ENCODE measurements at regions of chr1 and their contacts with region 1.

Region 1: DNA sequence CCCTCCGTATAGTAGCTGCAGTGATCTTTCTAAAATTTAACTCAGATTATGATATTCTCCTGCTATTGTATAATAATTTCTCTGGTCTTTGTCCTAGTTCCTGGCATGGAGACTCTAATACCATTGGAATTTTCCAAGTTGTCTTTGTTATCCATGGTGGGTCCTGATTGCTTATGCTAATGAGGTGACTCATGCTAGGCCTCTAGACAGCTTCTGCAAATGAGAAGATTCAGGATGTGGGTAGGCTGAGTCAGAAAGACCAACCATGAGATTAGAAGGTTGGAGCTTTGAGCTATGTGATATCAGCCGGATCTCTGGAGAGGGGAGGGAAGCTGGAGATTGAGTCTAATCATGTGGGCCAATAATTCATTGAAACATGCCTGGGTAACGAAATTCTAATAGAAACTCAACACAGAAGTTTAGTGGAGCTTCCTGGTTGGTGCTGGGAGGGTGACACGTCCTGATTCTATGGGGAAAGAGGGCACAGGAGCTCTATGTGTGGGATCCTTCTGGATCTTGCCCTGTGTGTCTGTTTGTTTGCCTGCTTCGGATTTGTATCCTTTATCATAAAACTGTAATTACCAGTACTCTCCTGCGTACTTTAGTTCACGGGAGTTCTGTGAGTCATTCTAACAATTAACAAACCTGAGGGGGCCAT is 73.2 kb upstream of the CNIH3 start:
- DNase-seq: peak; percentile 96
- H3K4me3 ChIP-seq: no peak overlapping the region
- H3K27ac ChIP-seq: peak overlapping the region; percentile 84
- H3K4me1 ChIP-seq: peaks cover 48% of the 10 kb centered on the region
- H3K27me3 ChIP-seq: no peaks in the 10 kb centered on the region
- CTCF ChIP-seq: no peak

Region 2: DNA sequence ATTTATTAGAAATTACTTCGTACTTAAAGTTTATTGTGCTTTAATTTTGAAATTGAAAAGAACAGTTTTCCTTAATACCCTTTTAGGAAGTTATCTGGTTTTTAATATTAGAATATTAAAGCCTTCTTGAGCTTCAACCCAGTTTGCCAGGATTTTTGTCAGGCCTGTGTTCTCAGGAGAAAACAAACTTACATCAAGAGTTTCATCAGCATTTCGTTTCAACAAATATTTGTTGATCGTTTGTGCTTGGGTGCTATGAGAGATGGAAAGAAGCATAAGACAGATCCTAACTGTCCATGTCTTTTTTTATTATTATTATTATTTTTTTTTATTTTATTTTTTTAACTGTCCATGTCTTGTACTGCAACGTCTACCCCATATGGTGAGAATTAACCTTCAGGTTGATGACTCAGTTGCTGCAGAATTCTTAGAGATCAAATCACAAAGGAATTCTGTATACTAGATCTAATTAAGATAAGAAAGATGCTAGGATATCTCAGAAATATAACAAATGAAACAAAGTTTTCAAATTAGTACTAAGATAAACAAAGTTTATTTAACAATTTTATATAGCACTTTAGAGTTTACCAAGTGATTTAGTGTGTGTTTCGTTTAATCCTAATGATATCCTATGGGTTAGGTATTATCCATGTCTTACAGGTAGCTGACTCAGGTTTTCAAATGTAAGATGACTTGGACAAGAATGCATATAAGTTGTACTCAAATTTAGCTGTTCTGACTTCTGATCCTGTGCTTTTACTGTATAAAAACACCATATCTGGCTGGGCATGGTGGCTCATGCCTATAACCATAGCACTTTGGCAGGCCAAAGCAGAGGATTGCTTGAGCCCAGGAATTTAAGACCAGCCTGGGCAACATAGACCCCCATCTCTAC is 414.7 kb before region 1 on chr1:
- CTCF ChIA-PET with region 1: no interaction called
- dilution Hi-C with region 1: no loop called
- in situ Hi-C with region 1: no loop called
- intact Hi-C with region 1: no loop called
- DNase-seq: peak; percentile 39
- H3K4me3 ChIP-seq: no peak overlapping the region
- H3K27ac ChIP-seq: peak overlapping the region; percentile 4
- H3K4me1 ChIP-seq: peaks cover 13% of the 10 kb centered on the region
- H3K27me3 ChIP-seq: no peaks in the 10 kb centered on the region
- CTCF ChIP-seq: no peak

Region 3: DNA sequence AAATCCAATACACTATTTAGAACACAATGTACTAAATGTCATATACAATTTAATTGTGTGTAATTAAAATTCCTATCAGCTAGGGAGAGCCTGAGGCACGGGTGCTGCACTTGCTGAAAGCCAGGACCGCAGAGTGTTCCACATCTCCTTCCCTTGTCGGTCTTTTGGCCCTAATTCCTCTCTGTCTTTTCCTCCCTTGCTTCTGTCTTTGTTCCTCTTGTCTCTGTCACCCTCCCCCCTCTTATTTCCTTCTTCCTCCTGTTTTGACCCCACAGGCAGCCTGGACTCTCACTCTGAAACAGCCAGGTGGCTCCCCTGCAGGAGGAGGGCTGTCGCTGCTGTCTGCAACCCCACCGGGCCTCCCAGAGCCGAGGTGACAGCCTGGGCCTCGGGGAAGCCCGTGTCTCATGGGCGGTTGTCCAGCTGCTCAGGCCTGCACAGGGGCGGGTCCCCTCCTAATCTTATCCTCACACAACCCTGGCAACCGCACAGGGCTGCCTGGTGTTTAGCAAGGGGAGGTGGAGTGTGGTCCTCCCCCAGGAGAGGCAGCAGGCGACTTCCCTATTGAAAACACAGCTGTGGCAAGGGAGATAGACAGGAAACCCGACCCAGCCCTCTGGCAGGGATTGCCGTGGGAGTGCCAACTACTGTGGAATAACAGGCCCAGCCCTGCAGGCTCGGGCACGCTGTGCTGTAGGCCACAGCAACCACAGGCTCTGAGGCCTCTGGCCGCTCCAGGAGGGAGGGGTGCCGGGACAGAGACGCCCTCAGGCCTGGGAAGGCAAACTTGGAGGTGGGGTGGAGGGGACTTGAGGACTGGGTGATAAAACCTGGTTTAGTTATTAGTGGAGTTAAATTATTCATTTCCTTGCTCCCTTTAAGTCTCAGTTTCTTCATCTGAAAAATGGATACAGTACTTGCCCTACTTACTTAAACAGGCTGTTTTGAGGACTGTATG is 39.5 kb before region 1 on chr1:
- CTCF ChIA-PET with region 1: no interaction called
- dilution Hi-C with region 1: no loop called
- in situ Hi-C with region 1: no loop called
- intact Hi-C with region 1: no loop called
- DNase-seq: peak; percentile 96
- H3K4me3 ChIP-seq: no peak overlapping the region
- H3K27ac ChIP-seq: peak overlapping the region; percentile 67
- H3K4me1 ChIP-seq: peaks cover 60% of the 10 kb centered on the region
- H3K27me3 ChIP-seq: no peaks in the 10 kb centered on the region
- CTCF ChIP-seq: peak in 1 of 2 donors; percentile 26

Region 4: GRCh38 chr1:224565186-224565585 is 22.3 kb after region 1 on chr1:
- CTCF ChIA-PET with region 1: interaction called, 5 read pairs
- dilution Hi-C with region 1: no loop called
- in situ Hi-C with region 1: no loop called
- intact Hi-C with region 1: loop called (anchors 2 kb)
- DNase-seq: peak; percentile 95
- H3K4me3 ChIP-seq: no peak overlapping the region
- H3K27ac ChIP-seq: peak overlapping the region; percentile 93
- H3K4me1 ChIP-seq: peaks cover 45% of the 10 kb centered on the region
- H3K27me3 ChIP-seq: no peaks in the 10 kb centered on the region
- CTCF ChIP-seq: no peak

Region 5: GRCh38 chr1:224592636-224593582 is 50.0 kb after region 1 on chr1:
- CTCF ChIA-PET with region 1: no interaction called
- dilution Hi-C with region 1: loop called (anchors 5 kb)
- in situ Hi-C with region 1: no loop called
- intact Hi-C with region 1: no loop called
- DNase-seq: peak; percentile 88
- H3K4me3 ChIP-seq: no peak overlapping the region
- H3K27ac ChIP-seq: peak overlapping the region; percentile 31
- H3K4me1 ChIP-seq: peaks cover 12% of the 10 kb centered on the region
- H3K27me3 ChIP-seq: no peaks in the 10 kb centered on the region
- CTCF ChIP-seq: no peak

Region 6: GRCh38 chr1:224623743-224624333 is 80.9 kb after region 1 on chr1:
- CTCF ChIA-PET with region 1: no interaction called
- dilution Hi-C with region 1: no loop called
- in situ Hi-C with region 1: no loop called
- intact Hi-C with region 1: loop called (anchors 2 kb)
- DNase-seq: peak; percentile 85
- H3K4me3 ChIP-seq: no peak overlapping the region
- H3K27ac ChIP-seq: peak overlapping the region; percentile 30
- H3K4me1 ChIP-seq: peaks cover 27% of the 10 kb centered on the region
- H3K27me3 ChIP-seq: no peaks in the 10 kb centered on the region
- CTCF ChIP-seq: no peak